PC-9 (cell line): ENCODE measurements at regions of chr12 and their contacts with region 1.

Region 1: DNA sequence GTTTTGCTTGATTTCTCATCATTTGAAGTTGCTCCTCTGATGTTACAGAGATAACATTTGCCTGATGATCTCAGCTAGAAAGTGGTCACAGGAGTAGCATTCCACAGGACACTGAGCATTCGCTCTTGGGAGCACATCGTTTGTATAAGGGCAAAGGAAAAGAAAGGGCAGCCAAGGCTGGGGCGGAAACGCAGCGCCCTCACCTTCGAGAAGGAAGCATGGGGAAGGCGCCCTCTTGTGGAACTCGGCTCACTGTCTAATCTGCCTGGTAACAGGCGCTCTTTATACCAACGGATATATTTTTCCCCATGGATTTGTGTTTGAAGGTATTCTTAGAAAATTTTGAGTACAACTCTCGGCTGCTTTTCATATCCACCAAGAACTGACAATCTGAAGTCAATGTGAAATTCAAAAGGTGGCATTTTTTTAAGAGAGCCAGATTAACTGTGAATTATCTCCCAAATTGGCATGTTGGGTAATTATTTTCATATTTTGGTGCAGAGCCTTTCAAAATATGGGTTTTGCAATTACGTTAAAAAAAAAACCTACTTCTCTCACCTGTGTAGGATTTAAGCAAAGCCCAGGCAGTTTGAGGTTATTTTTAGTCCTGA is 172.7 kb downstream of the CAND1 start:
- DNase-seq: peak in 1 of 2 experiments; percentile 77
- H3K4me3 ChIP-seq: no peak overlapping the region
- H3K27ac ChIP-seq: no peak overlapping the region
- H3K4me1 ChIP-seq: no peaks in the 10 kb centered on the region
- H3K27me3 ChIP-seq: no peaks in the 10 kb centered on the region
- CTCF ChIP-seq: peak; percentile 57

Region 2: DNA sequence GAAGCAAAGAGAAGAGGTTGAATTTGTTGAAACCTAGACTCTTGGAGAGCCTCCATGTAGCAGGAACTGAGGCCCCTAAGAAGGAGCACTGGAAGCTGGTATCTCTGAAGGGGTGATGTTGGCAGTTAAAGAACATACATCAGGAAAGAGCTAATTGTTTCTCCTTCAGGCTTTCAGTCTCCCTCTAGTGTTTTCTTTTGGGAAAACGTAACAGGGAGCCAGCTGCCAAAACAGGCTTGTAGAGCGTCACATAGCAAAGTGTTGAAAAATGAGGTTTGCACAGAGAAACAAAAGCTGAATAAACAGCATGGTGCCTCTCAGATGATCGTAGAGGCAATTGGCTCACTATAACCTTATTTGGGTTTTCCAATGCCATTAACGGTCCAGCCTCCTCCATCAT is 219.5 kb before region 1 on chr12:
- CTCF ChIA-PET with region 1: no interaction called
- POLR2A ChIA-PET with region 1: no interaction called
- intact Hi-C with region 1: no loop called
- DNase-seq: peak in 1 of 2 experiments; percentile 4
- H3K4me3 ChIP-seq: no peak overlapping the region
- H3K27ac ChIP-seq: no peak overlapping the region
- H3K4me1 ChIP-seq: no peaks in the 10 kb centered on the region
- H3K27me3 ChIP-seq: no peaks in the 10 kb centered on the region
- CTCF ChIP-seq: peak; percentile 60; the same call in 1 of the 2 replicates

Region 3: GRCh38 chr12:67320614-67321295 is 121.1 kb before region 1 on chr12:
- CTCF ChIA-PET with region 1: no interaction called
- POLR2A ChIA-PET with region 1: interaction called, 12 read pairs
- intact Hi-C with region 1: no loop called
- DNase-seq: peak in 1 of 2 experiments; percentile 41
- H3K4me3 ChIP-seq: no peak overlapping the region
- H3K27ac ChIP-seq: no peak overlapping the region
- H3K4me1 ChIP-seq: no peaks in the 10 kb centered on the region
- H3K27me3 ChIP-seq: no peaks in the 10 kb centered on the region
- CTCF ChIP-seq: no peak